Activated CD8-positive, alpha-beta T cell treated with anti-CD3 and anti-CD28 coated beads, Interleukin-2, amount 10 ng/mL, durations not matched to agents 7 days and 5 days (primary cell): ENCODE measurements at regions of chr17 and their contacts with region 1.

Region 1: DNA sequence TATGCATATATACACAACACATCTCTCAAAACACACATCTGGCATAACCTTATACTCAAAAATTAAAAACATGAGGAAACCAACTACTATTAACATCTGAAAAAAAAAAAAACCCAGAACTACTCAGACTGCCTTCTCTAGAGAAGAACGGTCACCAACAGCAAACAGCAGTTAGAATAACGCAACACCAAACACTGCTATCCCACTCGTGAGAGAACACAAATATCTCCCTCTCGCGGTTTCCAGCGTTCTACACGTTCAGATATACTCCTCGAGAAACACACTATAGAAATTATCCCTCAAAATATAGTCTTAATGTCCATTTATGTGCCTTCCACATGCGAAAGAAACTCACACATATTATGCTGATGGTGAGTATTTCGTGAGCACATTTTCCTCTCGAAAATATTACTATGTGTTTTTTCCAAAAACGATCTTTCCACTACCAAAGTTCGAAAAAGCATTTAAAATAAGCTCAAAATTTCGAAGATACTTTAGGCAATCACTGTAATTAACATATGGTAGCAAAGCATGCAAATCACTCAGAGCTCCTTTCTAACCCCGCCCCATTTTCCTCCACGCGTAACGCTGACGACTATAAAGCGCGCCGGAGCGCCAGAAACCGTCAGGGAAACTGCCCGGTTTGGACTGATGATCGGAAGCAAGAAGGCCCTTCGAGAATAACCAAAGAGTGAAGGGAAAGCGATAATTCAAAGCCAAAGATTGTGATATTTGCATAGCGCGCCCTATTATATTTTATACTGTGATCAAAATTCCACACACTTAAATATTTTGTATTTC is 60.1 kb downstream of the TEX14 start:
- DNase-seq: peak; percentile 97
- ATAC-seq: peak; percentile 89
- H3K4me3 Mint-ChIP-seq: no peak overlapping the region
- H3K27ac Mint-ChIP-seq: no peak overlapping the region
- H3K4me1 Mint-ChIP-seq: peaks cover 10% of the 10 kb centered on the region
- H3K27me3 Mint-ChIP-seq: no peaks in the 10 kb centered on the region

Region 2: DNA sequence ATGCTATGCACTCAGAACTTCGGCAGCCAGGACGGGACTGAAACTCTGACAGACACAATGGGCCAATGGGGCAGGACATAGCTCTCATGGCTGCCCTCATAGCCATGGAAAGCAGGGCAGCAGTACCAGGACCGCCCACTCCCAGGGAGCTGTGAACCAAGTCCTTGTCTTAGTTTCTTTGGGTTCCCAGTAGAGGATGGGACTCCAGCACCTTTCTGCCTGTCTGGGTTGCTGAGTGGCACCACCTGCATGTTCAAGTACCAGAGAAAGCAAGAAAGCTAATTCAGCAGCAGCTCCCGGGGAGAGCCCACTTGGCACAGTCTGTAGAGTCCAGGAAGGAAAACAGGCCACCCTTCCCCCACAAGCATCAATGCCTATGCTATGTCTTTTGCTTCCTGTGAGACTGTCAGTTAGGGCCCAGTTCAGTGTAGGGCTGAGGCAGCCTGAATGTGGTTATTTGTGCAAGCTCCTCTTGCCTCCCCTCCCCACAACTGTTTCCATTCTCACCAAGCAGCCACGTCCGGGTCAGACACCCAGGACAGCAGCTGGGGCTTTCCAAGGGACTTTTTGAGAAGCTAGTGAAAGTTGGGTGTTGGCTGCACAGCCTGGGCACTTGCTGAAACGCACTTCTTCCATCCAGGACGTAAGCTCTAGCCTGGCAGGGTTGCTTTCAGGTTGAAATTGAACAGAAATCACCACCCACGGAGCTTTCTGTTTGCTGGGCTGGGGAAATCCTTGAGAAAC is 287.5 kb before region 1 on chr17:
- CTCF ChIA-PET with region 1: no interaction called
- POLR2A ChIA-PET with region 1: interaction called, 12 read pairs
- DNase-seq: peak; percentile 91
- ATAC-seq: peak; percentile 76
- H3K4me3 Mint-ChIP-seq: peak overlapping the region; percentile 99
- H3K27ac Mint-ChIP-seq: peak overlapping the region; percentile 92
- H3K4me1 Mint-ChIP-seq: peaks cover 82% of the 10 kb centered on the region
- H3K27me3 Mint-ChIP-seq: no peaks in the 10 kb centered on the region

Region 3: GRCh38 chr17:58531661-58532554 is 99.8 kb before region 1 on chr17:
- CTCF ChIA-PET with region 1: no interaction called
- POLR2A ChIA-PET with region 1: interaction called, 46 read pairs
- DNase-seq: peak; percentile 66
- ATAC-seq: peak; percentile 93
- H3K4me3 Mint-ChIP-seq: peak overlapping the region; percentile 35
- H3K27ac Mint-ChIP-seq: no peak overlapping the region
- H3K4me1 Mint-ChIP-seq: peaks cover 11% of the 10 kb centered on the region
- H3K27me3 Mint-ChIP-seq: peaks cover 54% of the 10 kb centered on the region

Region 4: DNA sequence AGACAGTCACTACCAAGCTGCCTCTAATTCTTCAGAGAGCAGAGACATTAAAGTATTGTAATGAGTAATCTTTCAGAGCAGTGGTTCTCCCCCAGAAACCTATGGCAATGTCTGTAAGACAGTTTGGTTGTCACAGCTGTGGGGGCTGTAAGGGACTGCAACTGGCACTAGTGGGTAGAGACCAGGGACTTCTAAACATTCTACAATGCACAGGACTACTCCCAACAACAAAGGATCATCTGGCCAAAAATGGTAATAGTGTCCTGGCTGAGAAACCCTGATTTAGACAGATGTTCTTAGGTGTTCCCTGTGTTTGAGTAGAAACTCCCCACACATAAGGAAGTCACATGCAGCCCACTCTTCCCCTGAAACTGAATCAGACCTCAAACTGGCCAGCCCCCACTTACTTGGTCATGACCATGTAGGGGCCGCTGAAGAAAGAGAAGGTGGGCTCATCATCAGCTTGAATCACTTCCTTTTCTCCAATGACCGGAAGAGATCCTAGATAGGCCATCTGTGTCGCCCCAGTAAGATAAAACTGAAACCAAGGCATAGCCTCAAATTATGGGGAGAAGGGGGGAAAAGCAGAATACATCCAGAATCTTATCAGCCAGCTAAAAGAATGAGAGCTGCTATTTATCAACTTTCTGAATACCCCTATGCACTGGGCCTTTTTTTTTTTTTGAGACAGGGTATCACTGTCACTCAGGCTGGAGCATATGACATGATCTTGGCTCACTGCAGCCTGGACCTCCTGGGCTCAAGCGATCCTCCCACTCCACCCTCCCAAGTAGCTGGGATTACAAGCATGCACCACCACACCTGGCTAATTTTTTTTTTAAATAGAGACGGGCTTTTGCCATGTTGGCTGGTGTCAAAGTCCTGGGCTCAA is 15.7 kb before region 1 on chr17:
- CTCF ChIA-PET with region 1: interaction called, 6 read pairs
- POLR2A ChIA-PET with region 1: interaction called, 165 read pairs
- DNase-seq: no peak
- ATAC-seq: no peak
- H3K4me3 Mint-ChIP-seq: no peak overlapping the region
- H3K27ac Mint-ChIP-seq: peak overlapping the region; percentile 43
- H3K4me1 Mint-ChIP-seq: peaks cover 27% of the 10 kb centered on the region
- H3K27me3 Mint-ChIP-seq: no peaks in the 10 kb centered on the region

Region 5: DNA sequence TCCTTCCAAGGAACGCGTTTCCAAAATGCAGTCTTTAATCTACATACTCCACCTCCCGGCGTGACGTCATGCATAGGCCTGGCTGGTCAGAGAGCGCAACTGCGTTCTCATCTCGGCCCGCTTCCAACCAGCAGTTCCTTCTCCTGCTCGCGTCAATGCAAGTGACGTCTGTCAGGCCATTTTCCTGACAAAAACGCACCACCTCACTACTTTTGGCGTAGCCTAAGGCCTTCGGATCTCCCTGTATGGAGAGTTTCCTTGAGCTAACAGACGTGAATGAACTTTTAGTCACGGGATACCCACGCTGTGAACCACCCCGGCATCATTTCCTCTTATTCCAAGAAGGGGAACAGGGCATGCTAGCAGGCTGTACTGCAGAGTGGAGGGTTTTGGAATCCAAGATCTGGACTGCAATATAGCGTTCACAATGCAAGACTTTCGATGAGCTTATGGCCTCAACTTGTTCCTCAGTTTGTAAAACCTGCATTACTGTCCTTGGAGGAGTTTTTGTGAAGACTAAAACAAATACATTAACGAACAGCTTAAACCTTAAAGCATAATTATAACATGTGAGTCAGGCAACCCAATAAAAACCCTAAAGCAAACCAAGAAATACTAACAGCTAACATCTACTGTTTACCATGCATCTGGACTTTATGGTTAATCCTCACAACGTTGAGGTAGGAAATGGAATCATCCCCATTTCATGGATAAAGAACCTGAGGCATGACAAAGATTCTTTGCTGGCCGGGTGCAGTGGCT is 35.3 kb after region 1 on chr17:
- CTCF ChIA-PET with region 1: no interaction called
- POLR2A ChIA-PET with region 1: interaction called, 272 read pairs
- DNase-seq: peak; percentile 40
- ATAC-seq: no peak
- H3K4me3 Mint-ChIP-seq: no peak overlapping the region
- H3K27ac Mint-ChIP-seq: no peak overlapping the region
- H3K4me1 Mint-ChIP-seq: peaks cover 7% of the 10 kb centered on the region
- H3K27me3 Mint-ChIP-seq: peaks cover 22% of the 10 kb centered on the region

Region 6: GRCh38 chr17:59106463-59107305 is 475.0 kb after region 1 on chr17 and contains the start of gene TRIM37:
- CTCF ChIA-PET with region 1: no interaction called
- POLR2A ChIA-PET with region 1: interaction called, 15 read pairs
- DNase-seq: peak; percentile 99
- ATAC-seq: peak; percentile 98
- H3K4me3 Mint-ChIP-seq: peak within 1 kb of the TSS; percentile 97
- H3K27ac Mint-ChIP-seq: peak within 1 kb of the TSS; percentile 95
- H3K4me1 Mint-ChIP-seq: peaks cover 51% of the 10 kb centered on the region
- H3K27me3 Mint-ChIP-seq: no peaks in the 10 kb centered on the region
- total RNA-seq, gene TRIM37: 25.4 to 28.8 TPM